Activated CD8-positive, alpha-beta T cell treated with anti-CD3 and anti-CD28 coated beads, Interleukin-2, amount 10 ng/mL, durations not matched to agents 7 days and 5 days (primary cell): ENCODE measurements at regions of chr9 and their contacts with region 1.

Region 1: GRCh38 chr9:71285191-71285656 is 163.8 kb upstream of the TRPM3 start:
- DNase-seq: peak; percentile 61
- ATAC-seq: peak; percentile 79
- H3K4me3 Mint-ChIP-seq: no peak overlapping the region
- H3K27ac Mint-ChIP-seq: no peak overlapping the region
- H3K4me1 Mint-ChIP-seq: no peaks in the 10 kb centered on the region
- H3K27me3 Mint-ChIP-seq: peaks cover 2% of the 10 kb centered on the region

Region 2: GRCh38 chr9:71295928-71296327 is 10.7 kb after region 1 on chr9:
- CTCF ChIA-PET with region 1: interaction called, 16 read pairs
- POLR2A ChIA-PET with region 1: no interaction called
- DNase-seq: no peak
- ATAC-seq: no peak
- H3K4me3 Mint-ChIP-seq: no peak overlapping the region
- H3K27ac Mint-ChIP-seq: no peak overlapping the region
- H3K4me1 Mint-ChIP-seq: no peaks in the 10 kb centered on the region
- H3K27me3 Mint-ChIP-seq: peaks cover 2% of the 10 kb centered on the region